ENCODE measurements at regions of chr7 and their contacts with region 1.

Region 1: GRCh38 chr7:41705109-41705901 is 2.4 kb upstream of the INHBA start:
- DNase-seq: peak; percentile 55
- ATAC-seq: peak; percentile 99
- H3K4me3 ChIP-seq: peak overlapping the region; percentile 55 to 75 (median 67)
- H3K27ac ChIP-seq: no peak overlapping the region
- H3K4me1 ChIP-seq: peaks cover 17% of the 10 kb centered on the region
- H3K27me3 ChIP-seq: peaks cover 0 to 7% of the 10 kb centered on the region in 2 experiments; a peak in 3 of 5 replicates
- CTCF ChIP-seq: peak; percentile 90
- EP300 ChIP-seq: no peak
- POLR2A ChIP-seq: no peak
- RAD21 ChIP-seq: peak; percentile 64; the same call in 1 of the 2 replicates

Region 2: GRCh38 chr7:40232242-40232893 is 1472.9 kb before region 1 on chr7:
- CTCF ChIA-PET with region 1: no interaction called
- POLR2A ChIA-PET with region 1: no interaction called
- in situ Hi-C with region 1: loop called (anchors 25 kb)
- intact Hi-C with region 1: no loop called
- DNase-seq: peak; percentile 43
- ATAC-seq: peak; percentile 75
- H3K4me3 ChIP-seq: no peak overlapping the region
- H3K27ac ChIP-seq: no peak overlapping the region
- H3K4me1 ChIP-seq: no peaks in the 10 kb centered on the region; the same call in 1 of the 2 replicates
- H3K27me3 ChIP-seq: no peaks in the 10 kb centered on the region
- CTCF ChIP-seq: peak; percentile 71
- EP300 ChIP-seq: no peak
- POLR2A ChIP-seq: no peak
- RAD21 ChIP-seq: no peak

Region 3: GRCh38 chr7:40329601-40330153 is 1375.6 kb before region 1 on chr7:
- CTCF ChIA-PET with region 1: no interaction called
- POLR2A ChIA-PET with region 1: no interaction called
- in situ Hi-C with region 1: loop called (anchors 10 kb)
- intact Hi-C with region 1: no loop called
- DNase-seq: peak; percentile 52
- ATAC-seq: peak; percentile 52; the same call in 2 of the 3 replicates
- H3K4me3 ChIP-seq: no peak overlapping the region
- H3K27ac ChIP-seq: no peak overlapping the region
- H3K4me1 ChIP-seq: no peaks in the 10 kb centered on the region
- H3K27me3 ChIP-seq: no peaks in the 10 kb centered on the region
- CTCF ChIP-seq: peak; percentile 79
- EP300 ChIP-seq: no peak
- POLR2A ChIP-seq: no peak
- RAD21 ChIP-seq: peak; percentile 80

Region 4: DNA sequence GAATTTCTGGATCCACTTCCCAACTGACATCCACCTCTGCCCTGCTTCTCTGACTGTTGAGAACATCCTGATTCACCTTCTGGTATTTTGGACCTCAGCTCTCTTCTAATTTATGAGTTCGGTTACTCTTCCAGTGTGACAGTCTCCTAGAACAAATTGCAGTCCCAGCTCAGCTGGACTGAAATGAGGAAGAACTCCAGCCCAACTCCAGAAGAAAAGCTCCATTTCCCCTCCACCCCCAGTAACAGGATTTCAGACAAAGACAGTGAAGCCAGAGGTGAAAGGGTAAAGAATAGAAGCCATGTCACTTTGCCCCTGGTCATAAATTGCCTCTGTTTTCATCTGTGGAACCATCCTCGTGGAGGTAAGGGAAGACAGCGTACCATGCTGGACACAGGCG is 23.8 kb after region 1 on chr7:
- CTCF ChIA-PET with region 1: no interaction called
- POLR2A ChIA-PET with region 1: no interaction called
- in situ Hi-C with region 1: no loop called
- intact Hi-C with region 1: loop called (anchors 1 kb)
- DNase-seq: no peak
- ATAC-seq: no peak
- H3K4me3 ChIP-seq: no peak overlapping the region
- H3K27ac ChIP-seq: no peak overlapping the region
- H3K4me1 ChIP-seq: no peaks in the 10 kb centered on the region
- H3K27me3 ChIP-seq: no peaks in the 10 kb centered on the region
- CTCF ChIP-seq: no peak
- EP300 ChIP-seq: no peak
- POLR2A ChIP-seq: no peak
- RAD21 ChIP-seq: no peak

Region 5: GRCh38 chr7:41967156-41967555 is 261.9 kb after region 1 on chr7:
- CTCF ChIA-PET with region 1: no interaction called
- POLR2A ChIA-PET with region 1: no interaction called
- in situ Hi-C with region 1: no loop called
- intact Hi-C with region 1: no loop called
- DNase-seq: no peak
- ATAC-seq: no peak
- H3K4me3 ChIP-seq: no peak overlapping the region
- H3K27ac ChIP-seq: no peak overlapping the region
- H3K4me1 ChIP-seq: peaks cover 12% of the 10 kb centered on the region
- H3K27me3 ChIP-seq: no peaks in the 10 kb centered on the region; a peak in 1 of 5 replicates
- CTCF ChIP-seq: no peak
- EP300 ChIP-seq: no peak
- POLR2A ChIP-seq: no peak
- RAD21 ChIP-seq: no peak

Measured in HepG2 (cell line).